ENCODE measurements at regions of chr11 and their contacts with region 1.

Region 1: DNA sequence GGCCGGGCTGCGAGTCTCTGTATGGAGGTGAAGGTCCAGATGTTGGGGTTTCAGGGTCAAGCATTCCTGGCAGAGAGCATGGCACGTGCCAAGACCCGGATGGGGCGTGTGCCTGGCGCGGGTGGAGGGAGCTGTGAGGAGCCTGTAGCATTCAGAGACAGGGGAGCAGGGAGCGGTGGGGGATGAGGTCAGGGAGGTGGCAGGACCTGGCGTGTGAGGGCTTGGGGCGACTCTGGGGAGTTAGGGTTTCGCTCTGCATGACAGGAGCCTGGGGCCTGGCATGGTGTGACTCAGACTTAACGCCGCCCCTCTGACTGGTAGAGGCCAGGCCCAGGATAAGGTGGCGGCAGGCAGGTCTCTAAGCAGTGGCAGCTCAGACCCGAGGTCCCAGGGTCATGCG is 103.0 kb downstream of the KCNQ1 start:
- DNase-seq: no peak
- H3K4me3 ChIP-seq: no peak overlapping the region
- H3K27ac ChIP-seq: no peak overlapping the region
- H3K4me1 ChIP-seq: no peaks in the 10 kb centered on the region
- H3K27me3 ChIP-seq: no peaks in the 10 kb centered on the region
- CTCF ChIP-seq: no peak
- POLR2A ChIP-seq: no peak

Region 2: GRCh38 chr11:2559527-2560311 is 11.9 kb after region 1 on chr11:
- intact Hi-C with region 1: loop called (anchors 1 kb)
- DNase-seq: no peak
- H3K4me3 ChIP-seq: no peak overlapping the region
- H3K27ac ChIP-seq: no peak overlapping the region
- H3K4me1 ChIP-seq: no peaks in the 10 kb centered on the region
- H3K27me3 ChIP-seq: no peaks in the 10 kb centered on the region
- CTCF ChIP-seq: no peak
- POLR2A ChIP-seq: no peak

Measured in breast epithelium (tissue), 4 donors.